ENCODE measurements at regions of chr12 and their contacts with region 1.

Region 1: DNA sequence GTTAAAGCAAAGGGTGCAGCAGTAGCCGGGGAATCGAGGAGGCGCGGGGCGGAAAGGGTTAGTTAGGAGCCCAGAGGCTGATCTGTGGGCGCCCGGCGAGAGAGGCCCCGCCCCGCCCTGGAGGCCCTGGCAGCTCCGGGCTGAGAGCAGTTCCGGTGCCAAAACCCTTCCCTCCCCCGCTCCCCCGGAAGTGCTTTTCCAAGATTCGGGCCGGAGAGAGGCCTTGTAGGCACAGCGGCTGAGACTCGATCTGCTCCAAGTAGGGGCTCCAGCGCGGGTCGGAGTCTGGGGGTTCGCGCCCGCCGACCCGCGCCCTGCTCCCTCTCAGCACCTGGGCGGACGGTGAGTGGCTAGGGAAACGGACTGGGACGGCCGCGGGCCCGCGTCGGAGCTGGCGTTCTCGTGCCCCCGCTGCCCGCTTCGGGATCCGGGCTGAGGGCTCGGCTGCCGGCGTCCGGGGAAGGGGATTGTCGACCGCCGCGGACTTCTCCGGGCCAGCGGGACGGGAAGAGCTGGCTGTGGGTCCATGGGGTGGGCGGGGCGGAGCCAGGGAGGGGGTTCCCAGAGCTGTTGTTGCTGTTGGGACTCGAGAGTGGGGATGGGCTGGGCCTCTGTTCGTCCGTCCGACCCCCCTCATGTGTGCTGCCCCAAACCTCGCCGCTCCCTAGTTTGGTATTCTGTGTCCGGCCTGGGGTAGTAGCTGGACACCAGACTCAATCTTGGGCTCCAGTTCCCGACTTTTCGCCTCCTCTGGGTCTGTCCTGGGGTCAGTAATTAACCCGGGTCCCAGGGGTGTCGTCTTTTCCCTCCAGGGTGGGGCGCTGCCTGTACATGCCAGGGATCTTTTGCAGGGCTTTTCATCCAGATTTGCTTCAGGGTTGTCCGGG is at the start of gene FRS2:
- DNase-seq: peak; percentile 93
- ATAC-seq: peak; percentile 98
- total RNA-seq, gene FRS2: 19.0 TPM

Region 2: DNA sequence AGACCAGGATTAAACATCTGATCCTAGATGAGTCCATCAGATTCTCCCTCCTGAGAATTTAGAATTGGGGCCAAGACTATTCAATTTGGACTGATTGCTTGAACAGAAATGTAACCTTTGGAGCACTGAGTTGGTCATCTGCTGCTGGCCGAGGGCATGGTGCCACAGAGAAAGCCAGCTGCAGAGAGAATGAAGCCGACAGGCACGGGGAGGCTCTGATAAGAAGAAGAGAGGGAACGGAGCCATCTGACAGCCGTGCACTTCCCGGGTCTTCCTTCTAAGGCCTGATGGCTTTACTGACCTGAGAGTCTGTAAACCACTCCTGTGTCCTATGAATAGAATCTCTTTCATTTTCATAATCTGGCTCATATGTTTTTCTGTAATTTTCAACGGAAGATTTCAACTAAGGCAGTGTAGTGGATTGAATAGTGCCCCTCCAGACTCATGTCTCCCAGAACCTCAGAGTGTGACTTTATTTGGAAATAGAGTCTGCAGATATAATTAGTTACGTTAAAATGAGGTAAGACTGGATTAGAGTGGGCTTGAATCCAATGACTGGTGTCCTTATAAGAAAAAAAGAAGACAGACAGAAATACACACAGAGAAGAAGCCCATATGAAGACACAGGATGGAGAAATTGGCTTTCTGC is 39.4 kb before region 1 on chr12:
- intact Hi-C with region 1: no loop called
- DNase-seq: no peak
- ATAC-seq: peak; percentile 82

Region 3: GRCh38 chr12:69511469-69512267 is 41.2 kb after region 1 on chr12:
- intact Hi-C with region 1: loop called (anchors 5 kb)
- DNase-seq: no peak
- ATAC-seq: peak; percentile 68